Cardiac septum (tissue), 1 donor: ENCODE measurements at regions of chr15 and their contacts with region 1.

Region 1: GRCh38 chr15:94844538-94845389 is 613.4 kb downstream of the MCTP2 start:
- DNase-seq: peak; percentile 87

Region 2: DNA sequence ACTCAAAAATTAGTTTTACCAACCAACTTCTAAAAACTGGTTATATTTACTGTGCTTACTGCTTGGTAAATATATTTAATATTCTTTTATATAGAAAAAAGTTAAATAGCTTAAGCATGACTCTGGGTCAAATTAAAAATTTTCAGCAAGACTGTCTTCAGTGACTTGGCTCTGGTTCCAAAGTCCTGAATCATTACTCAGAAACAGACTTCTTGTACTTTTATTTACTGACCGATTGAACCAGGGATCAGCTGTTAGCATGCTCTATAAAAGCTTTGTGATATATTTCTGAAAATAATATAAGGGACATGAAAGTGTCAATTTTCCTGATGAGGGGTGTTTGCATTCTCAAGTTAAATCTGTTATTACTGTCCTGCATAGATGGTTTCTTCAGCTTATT is 449.1 kb before region 1 on chr15:
- intact Hi-C with region 1: loop called (anchors 10 kb)
- DNase-seq: no peak

Region 3: GRCh38 chr15:94700211-94700610 is 144.6 kb before region 1 on chr15:
- intact Hi-C with region 1: loop called (anchors 10 kb)
- DNase-seq: no peak

Region 4: DNA sequence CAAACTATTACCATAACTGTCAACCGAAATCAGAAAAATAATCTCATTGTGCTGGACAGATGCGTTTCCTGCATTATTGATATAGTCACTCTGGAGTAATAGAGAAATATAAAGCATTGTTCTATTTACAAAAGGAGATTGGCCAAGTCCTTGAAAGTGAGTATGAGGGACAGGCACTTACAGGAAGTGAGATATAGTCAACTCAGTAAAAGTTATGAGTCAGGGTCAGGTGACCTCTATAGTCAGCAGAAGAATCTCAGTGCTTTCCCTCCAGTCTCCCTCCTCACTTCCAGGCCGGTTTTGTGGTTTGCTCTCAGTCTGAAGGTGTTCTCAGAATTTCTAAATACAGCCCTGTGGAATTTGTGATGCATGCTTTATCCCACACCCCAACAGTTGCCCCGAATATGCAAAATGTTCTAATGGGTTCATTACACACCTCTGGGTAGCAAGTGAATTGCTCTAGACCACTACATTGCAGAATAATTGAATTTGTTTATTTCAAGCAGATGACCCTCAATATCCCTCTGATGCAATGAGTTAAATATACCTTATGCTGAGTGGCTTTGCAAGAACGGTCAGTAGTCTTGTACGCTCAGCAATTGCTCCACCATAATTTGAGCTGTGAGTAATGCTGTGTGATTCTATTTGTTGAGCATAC is 174.3 kb after region 1 on chr15:
- intact Hi-C with region 1: loop called (anchors 5 kb)
- DNase-seq: no peak

Region 5: GRCh38 chr15:95051861-95052260 is 207.1 kb after region 1 on chr15:
- intact Hi-C with region 1: no loop called
- DNase-seq: no peak